CD14-positive monocyte (primary cell): ENCODE measurements at regions of chr1 and their contacts with region 1.

Region 1: GRCh38 chr1:182855911-182856310 is 16.8 kb downstream of the DHX9 start:
- DNase-seq: no peak
- H3K4me3 ChIP-seq: no peak overlapping the region
- H3K4me3 Mint-ChIP-seq: no peak overlapping the region
- H3K27ac ChIP-seq: no peak overlapping the region
- H3K27ac Mint-ChIP-seq: no peak overlapping the region
- H3K4me1 ChIP-seq: no peaks in the 10 kb centered on the region
- H3K4me1 Mint-ChIP-seq: no peaks in the 10 kb centered on the region
- H3K27me3 ChIP-seq: no peaks in the 10 kb centered on the region
- H3K27me3 Mint-ChIP-seq: no peaks in the 10 kb centered on the region
- CTCF ChIP-seq: no peak

Region 2: DNA sequence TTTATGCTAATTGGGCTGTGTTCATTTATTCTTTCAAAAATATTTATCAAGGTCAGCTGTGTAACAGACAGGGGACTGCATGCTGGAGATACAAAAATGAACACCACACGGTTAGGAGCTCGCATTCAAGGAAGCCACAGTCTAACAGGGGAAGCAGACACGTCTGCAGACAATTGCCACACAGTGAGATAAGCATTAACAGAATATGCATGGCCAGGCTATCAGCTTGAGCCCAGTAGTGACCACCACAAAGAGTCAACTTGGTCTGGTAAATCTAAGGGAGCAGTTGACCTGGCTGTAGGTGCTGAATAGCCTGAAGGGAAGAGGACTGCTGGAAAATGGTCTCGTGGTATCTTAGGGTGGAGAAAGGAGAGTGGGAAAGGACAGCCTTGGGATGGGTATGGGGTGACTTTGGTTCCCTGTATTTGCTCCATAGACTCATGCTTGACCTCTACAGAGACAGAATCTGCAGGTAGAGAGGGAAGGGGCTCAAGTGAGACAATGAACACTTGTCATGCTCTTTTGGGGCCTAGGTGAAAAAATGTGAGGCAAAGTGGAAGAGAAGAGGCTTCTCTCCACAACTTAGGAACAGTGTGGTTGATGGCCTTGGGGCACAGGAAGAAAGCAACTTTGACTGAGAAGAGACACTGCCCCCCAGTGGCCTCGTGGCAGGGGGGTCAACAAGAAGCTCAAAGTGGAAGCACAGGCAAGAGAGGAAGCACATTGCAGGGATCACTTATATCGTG is 73.9 kb before region 1 on chr1:
- intact Hi-C with region 1: no loop called
- DNase-seq: peak; percentile 44 to 63 (median 54)
- H3K4me3 ChIP-seq: no peak overlapping the region
- H3K4me3 Mint-ChIP-seq: no peak overlapping the region
- H3K27ac ChIP-seq: no peak overlapping the region
- H3K27ac Mint-ChIP-seq: peak overlapping the region in 1 of 7 donors; percentile 19
- H3K4me1 ChIP-seq: no peaks in the 10 kb centered on the region
- H3K4me1 Mint-ChIP-seq: peaks cover 17% of the 10 kb centered on the region
- H3K27me3 ChIP-seq: no peaks in the 10 kb centered on the region
- H3K27me3 Mint-ChIP-seq: peaks cover 1 to 8% (median 2%) of the 10 kb centered on the region in 3 donors
- CTCF ChIP-seq: peak; percentile 52

Region 3: GRCh38 chr1:182917378-182917777 is 61.5 kb after region 1 on chr1:
- intact Hi-C with region 1: no loop called
- DNase-seq: no peak
- H3K4me3 ChIP-seq: no peak overlapping the region
- H3K4me3 Mint-ChIP-seq: no peak overlapping the region
- H3K27ac ChIP-seq: no peak overlapping the region
- H3K27ac Mint-ChIP-seq: no peak overlapping the region
- H3K4me1 ChIP-seq: no peaks in the 10 kb centered on the region
- H3K4me1 Mint-ChIP-seq: no peaks in the 10 kb centered on the region
- H3K27me3 ChIP-seq: no peaks in the 10 kb centered on the region
- H3K27me3 Mint-ChIP-seq: peaks cover 7 to 14% (median 12%) of the 10 kb centered on the region in 3 donors
- CTCF ChIP-seq: no peak

Region 4: GRCh38 chr1:183551904-183552303 is 696.0 kb after region 1 on chr1:
- intact Hi-C with region 1: loop called in 1 of 2 experiments (anchors 10 kb)
- DNase-seq: no peak
- H3K4me3 ChIP-seq: no peak overlapping the region
- H3K4me3 Mint-ChIP-seq: no peak overlapping the region
- H3K27ac ChIP-seq: peak overlapping the region; percentile 7 to 66
- H3K27ac Mint-ChIP-seq: peak overlapping the region in 6 of 7 donors; percentile 41 to 83 (median 68)
- H3K4me1 ChIP-seq: no peaks in the 10 kb centered on the region
- H3K4me1 Mint-ChIP-seq: peaks cover 6% of the 10 kb centered on the region
- H3K27me3 ChIP-seq: no peaks in the 10 kb centered on the region
- H3K27me3 Mint-ChIP-seq: no peaks in the 10 kb centered on the region
- CTCF ChIP-seq: no peak